ENCODE measurements at regions of chr11 and their contacts with region 1.

Region 1: DNA sequence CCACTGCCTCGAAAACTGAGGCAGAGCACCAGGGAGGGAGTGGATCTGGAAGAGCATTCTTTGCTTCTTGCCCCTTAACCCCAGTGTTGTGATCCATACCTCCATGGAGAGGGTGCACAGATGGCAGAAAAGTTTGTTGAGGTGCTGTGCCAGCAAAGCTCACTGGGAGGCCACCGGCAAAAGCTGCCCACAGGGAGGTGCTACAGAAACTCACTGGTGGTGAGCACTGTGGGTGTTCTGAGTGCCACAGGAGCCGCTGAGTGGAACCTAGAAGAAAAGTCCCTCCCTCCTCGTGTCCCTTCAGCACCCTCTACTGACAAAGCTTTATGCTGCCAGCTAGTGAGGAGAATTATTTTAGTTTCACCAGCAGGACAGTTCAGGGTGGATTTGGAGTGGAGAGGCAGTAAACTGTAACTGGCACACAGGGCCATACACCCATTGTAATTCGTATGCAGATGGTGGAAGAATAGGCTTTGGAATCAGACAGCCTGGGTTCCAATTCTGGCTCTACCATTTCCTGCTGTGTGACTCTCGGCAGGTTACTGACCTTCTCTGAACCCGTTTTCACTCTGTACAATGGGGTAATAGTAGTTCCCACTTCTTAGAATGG is 84.6 kb downstream of the SWAP70 start:
- DNase-seq: peak; percentile 55 to 80
- ATAC-seq: peak; percentile 95 to 100 (median 99)
- H3K4me3 ChIP-seq: no peak overlapping the region
- H3K4me3 Mint-ChIP-seq: no peak overlapping the region
- H3K27ac ChIP-seq: no peak overlapping the region
- H3K27ac Mint-ChIP-seq: peak overlapping the region in 1 of 2 donors; percentile 40
- H3K4me1 ChIP-seq: peaks cover 10% of the 10 kb centered on the region
- H3K4me1 Mint-ChIP-seq: peaks cover 13 to 14% of the 10 kb centered on the region in 2 donors
- H3K27me3 ChIP-seq: no peaks in the 10 kb centered on the region
- H3K27me3 Mint-ChIP-seq: no peaks in the 10 kb centered on the region
- CTCF ChIP-seq: peak; percentile 61

Region 2: DNA sequence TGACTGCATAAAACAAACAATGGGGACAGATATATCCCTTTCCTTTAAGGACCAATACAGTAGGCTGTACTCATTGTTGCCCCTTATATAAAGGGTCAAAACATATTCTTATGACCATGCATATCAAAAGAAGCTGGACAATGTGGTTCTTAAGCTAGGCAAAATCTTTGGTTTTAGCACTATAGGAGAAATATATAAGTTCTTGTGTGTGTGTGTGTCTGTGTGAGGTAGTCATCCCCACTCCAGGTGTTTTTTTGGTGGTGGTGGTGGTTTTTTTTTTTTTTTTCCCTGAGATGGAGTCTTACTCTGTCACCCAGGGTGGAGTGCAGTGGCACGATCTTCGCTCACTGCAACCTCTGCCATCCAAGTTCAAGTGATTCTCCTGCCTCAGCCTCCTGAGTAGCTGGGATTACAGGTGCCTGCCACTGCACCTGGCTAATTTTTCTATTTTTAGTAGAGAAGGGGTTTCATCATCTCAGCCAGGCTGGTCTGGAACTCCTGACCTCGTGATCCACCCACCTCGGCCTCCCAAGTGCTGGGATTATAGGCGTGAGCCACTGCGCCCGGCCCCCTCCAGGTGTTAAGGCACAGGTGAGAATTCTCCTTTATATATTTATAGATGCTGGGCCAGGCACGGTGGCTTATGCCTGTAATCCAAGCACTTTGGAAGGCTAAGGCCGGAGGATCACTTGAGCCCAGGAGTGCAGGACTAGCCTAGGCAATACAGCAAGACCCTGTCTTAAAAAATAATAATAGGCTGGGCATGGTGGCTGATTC is 299.7 kb before region 1 on chr11:
- intact Hi-C with region 1: no loop called
- DNase-seq: no peak
- ATAC-seq: no peak
- H3K4me3 ChIP-seq: no peak overlapping the region
- H3K4me3 Mint-ChIP-seq: no peak overlapping the region
- H3K27ac ChIP-seq: no peak overlapping the region
- H3K27ac Mint-ChIP-seq: no peak overlapping the region
- H3K4me1 ChIP-seq: no peaks in the 10 kb centered on the region
- H3K4me1 Mint-ChIP-seq: no peaks in the 10 kb centered on the region
- H3K27me3 ChIP-seq: no peaks in the 10 kb centered on the region
- H3K27me3 Mint-ChIP-seq: no peaks in the 10 kb centered on the region
- CTCF ChIP-seq: no peak

Region 3: DNA sequence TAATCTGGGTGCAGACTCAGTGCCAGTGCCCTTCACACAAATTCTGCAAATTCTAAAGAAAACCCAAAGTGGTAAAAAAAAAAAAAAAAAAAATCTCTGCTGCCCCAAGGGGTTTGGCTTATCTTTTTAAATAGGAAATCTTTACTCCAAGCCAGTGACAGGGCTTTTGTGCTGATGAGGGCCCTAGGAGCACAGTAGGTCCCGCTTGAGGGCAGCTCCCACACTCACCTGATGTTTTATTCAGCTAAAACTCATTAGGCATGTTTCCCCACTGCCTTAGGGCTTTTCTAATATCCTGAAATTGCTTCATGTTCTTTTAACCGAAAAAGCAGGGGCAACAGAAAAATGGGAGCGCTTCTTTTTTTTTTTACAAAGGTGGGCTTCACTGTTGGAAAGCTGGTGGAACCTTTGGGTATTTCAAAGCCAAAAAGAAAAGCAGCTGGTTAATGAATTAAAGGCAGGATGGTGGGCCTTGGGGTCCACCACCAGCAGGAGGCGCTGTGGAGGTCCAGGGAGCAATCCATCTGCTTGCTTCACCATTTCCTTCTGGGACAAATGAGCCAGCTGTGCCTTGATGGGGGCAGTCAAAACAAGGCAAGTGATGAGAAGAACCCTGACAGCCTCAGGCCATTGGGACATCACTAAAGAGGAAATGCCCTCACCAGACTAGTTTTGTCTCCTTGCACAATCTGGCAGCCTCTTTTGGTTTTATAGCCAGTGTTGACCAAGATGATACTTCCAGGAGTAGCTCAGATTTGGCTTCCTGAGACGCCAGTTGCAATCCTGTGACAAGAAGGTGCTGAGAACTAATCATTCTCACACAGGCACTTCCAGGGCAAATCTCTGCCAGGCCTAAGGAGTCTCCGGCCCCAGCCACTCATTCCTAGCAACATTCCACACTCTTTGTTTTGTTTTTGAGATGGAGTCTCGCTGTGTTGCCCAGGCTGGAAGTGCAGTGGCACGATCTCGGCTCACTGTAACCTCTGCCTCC is 213.4 kb before region 1 on chr11:
- intact Hi-C with region 1: loop called (anchors 1 kb)
- DNase-seq: peak; percentile 77 to 87
- ATAC-seq: peak; percentile 69 to 84 (median 78)
- H3K4me3 ChIP-seq: no peak overlapping the region
- H3K4me3 Mint-ChIP-seq: no peak overlapping the region
- H3K27ac ChIP-seq: no peak overlapping the region
- H3K27ac Mint-ChIP-seq: no peak overlapping the region
- H3K4me1 ChIP-seq: no peaks in the 10 kb centered on the region
- H3K4me1 Mint-ChIP-seq: no peaks in the 10 kb centered on the region
- H3K27me3 ChIP-seq: no peaks in the 10 kb centered on the region
- H3K27me3 Mint-ChIP-seq: no peaks in the 10 kb centered on the region
- CTCF ChIP-seq: peak; percentile 89

Region 4: DNA sequence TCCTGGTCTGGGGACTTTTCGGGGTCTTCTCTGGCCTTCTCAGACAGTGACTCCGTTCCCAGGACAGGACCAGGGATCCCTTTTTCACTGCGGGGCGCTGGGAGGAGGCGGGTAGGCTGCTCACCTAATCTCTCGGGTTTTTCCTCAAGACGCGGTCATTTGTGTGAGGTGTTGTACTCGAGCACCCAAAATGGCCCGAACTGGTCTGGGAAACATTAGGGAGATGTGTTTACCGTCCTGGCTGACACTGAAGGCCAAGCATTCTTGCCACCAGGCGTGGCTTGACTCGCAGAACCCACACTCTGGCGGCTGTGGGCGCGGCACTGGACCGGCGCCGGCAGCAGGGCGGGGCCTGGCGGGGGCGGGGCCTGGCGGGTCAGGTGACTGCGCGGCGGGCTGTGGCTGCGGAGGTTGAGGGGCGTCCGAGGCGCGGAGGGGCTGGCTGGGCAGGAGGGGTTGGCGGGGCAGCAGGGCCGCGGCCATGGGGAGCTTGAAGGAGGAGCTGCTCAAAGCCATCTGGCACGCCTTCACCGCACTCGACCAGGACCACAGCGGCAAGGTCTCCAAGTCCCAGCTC is 84.7 kb before region 1 on chr11 and contains the start of gene SWAP70:
- intact Hi-C with region 1: loop called (anchors 5 kb)
- DNase-seq: peak; percentile 74 to 85
- ATAC-seq: peak; percentile 94 to 97 (median 97)
- H3K4me3 ChIP-seq: peak within 1 kb of the TSS; percentile 55
- H3K4me3 Mint-ChIP-seq: peak within 1 kb of the TSS; percentile 89
- H3K27ac ChIP-seq: peak within 1 kb of the TSS; percentile 48
- H3K27ac Mint-ChIP-seq: peak within 1 kb of the TSS; percentile 68 to 89
- H3K4me1 ChIP-seq: peaks cover 14% of the 10 kb centered on the region
- H3K4me1 Mint-ChIP-seq: peaks cover 19 to 25% of the 10 kb centered on the region in 2 donors
- H3K27me3 ChIP-seq: no peaks in the 10 kb centered on the region
- H3K27me3 Mint-ChIP-seq: peaks cover 6 to 8% of the 10 kb centered on the region in 2 donors
- CTCF ChIP-seq: no peak
- total RNA-seq, gene SWAP70: 11.8 to 14.0 (median 11.9) TPM

Measured in natural killer cell (primary cell).